Endothelial cell of umbilical vein (primary cell): ENCODE measurements at regions of chr11 and their contacts with region 1.

Region 1: DNA sequence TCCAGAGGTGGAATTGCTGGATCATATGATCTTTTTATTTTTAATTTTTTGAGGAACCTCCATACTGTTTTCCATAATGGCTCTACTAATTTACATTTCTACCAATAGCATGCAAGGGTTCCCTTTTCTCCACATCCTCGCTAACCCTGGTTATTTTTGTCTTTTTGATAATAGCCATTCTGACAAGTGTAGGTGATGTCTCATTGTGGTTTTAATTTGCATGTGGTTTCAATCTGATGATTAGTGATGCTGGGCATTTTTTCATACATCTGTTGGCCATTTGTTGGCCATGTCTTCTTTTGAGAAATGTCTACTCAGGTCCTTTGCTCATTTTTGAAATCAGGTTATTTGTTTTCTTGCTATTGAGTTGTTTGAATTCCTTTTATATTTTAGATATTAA is 15.4 kb upstream of the OR4D5 start:
- DNase-seq: no peak
- H3K4me3 ChIP-seq: no peak overlapping the region
- H3K27ac ChIP-seq: no peak overlapping the region
- H3K4me1 ChIP-seq: no peaks in the 10 kb centered on the region
- H3K27me3 ChIP-seq: no peaks in the 10 kb centered on the region
- CTCF ChIP-seq: no peak
- POLR2A ChIP-seq: no peak

Region 2: DNA sequence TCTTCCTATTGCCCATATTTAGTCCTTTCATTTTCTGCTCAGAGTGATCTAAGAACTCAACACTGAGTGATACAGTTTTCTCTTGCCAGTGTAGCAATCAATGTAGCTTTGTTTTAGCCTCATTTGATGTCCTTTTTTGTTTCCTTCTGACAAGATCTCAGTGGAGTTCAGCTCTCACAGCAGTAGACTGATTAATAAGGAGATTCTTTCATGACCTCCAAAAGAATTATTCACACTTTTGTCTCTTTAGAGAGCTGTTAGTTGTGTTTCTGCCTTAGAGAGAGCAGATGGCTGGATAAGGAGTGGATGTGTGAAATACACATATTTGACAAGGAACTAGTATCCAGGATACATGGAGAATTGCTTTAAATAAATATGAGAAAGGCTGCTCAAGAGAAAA is 32.0 kb before region 1 on chr11:
- CTCF ChIA-PET with region 1: no interaction called
- POLR2A ChIA-PET with region 1: no interaction called
- dilution Hi-C with region 1: no loop called
- intact Hi-C with region 1: loop called (anchors 2 kb)
- DNase-seq: no peak
- H3K4me3 ChIP-seq: no peak overlapping the region
- H3K27ac ChIP-seq: no peak overlapping the region
- H3K4me1 ChIP-seq: no peaks in the 10 kb centered on the region
- H3K27me3 ChIP-seq: no peaks in the 10 kb centered on the region
- CTCF ChIP-seq: no peak
- POLR2A ChIP-seq: no peak

Region 3: DNA sequence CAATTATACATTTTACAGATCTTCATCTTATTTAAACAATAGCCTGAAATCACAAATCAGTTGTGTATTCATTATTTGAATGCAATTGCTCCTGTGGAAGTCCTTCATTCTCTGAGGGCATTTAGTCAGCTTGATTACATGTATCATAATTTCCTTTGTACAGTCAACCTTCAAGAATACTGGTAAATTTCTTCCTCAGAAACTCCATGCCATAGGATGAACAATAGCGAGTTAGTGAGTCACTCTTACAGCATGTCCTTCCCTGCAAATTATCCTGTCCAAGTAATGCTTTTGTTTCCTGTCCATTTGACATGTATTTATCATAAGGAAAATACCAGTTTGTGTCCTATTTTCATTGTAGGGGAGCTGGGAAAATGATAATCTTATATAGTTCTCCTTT is 49.8 kb after region 1 on chr11:
- CTCF ChIA-PET with region 1: no interaction called
- POLR2A ChIA-PET with region 1: no interaction called
- dilution Hi-C with region 1: no loop called
- intact Hi-C with region 1: no loop called
- DNase-seq: peak; percentile 96
- H3K4me3 ChIP-seq: no peak overlapping the region
- H3K27ac ChIP-seq: peak overlapping the region; percentile 93
- H3K4me1 ChIP-seq: peaks cover 24% of the 10 kb centered on the region
- H3K27me3 ChIP-seq: no peaks in the 10 kb centered on the region
- CTCF ChIP-seq: no peak
- POLR2A ChIP-seq: peak; percentile 54

Region 4: GRCh38 chr11:124036666-124037065 is 112.6 kb after region 1 on chr11:
- CTCF ChIA-PET with region 1: no interaction called
- POLR2A ChIA-PET with region 1: no interaction called
- dilution Hi-C with region 1: no loop called
- intact Hi-C with region 1: loop called (anchors 10 kb)
- DNase-seq: no peak
- H3K4me3 ChIP-seq: no peak overlapping the region
- H3K27ac ChIP-seq: no peak overlapping the region
- H3K4me1 ChIP-seq: no peaks in the 10 kb centered on the region
- H3K27me3 ChIP-seq: no peaks in the 10 kb centered on the region
- CTCF ChIP-seq: no peak
- POLR2A ChIP-seq: no peak